ENCODE measurements at regions of chr5 and their contacts with region 1.

Region 1: GRCh38 chr5:151164686-151165392 is 7.3 kb upstream of the ANXA6 start:
- DNase-seq: peak; percentile 75
- ATAC-seq: peak; percentile 99
- H3K4me3 ChIP-seq: no peak overlapping the region
- H3K27ac ChIP-seq: no peak overlapping the region
- H3K4me1 ChIP-seq: no peaks in the 10 kb centered on the region
- H3K27me3 ChIP-seq: no peaks in the 10 kb centered on the region; the same call in 1 of the 2 replicates
- CTCF ChIP-seq: peak; percentile 92

Region 2: GRCh38 chr5:151002250-151002649 is 162.6 kb before region 1 on chr5:
- CTCF ChIA-PET with region 1: interaction called, 5 read pairs
- POLR2A ChIA-PET with region 1: no interaction called
- in situ Hi-C with region 1: no loop called
- intact Hi-C with region 1: loop called (anchors 5 kb)
- DNase-seq: no peak
- ATAC-seq: peak; percentile 60
- H3K4me3 ChIP-seq: no peak overlapping the region
- H3K27ac ChIP-seq: no peak overlapping the region
- H3K4me1 ChIP-seq: no peaks in the 10 kb centered on the region
- H3K27me3 ChIP-seq: no peaks in the 10 kb centered on the region
- CTCF ChIP-seq: peak; percentile 73

Region 3: GRCh38 chr5:151126199-151126645 is 38.6 kb before region 1 on chr5:
- CTCF ChIA-PET with region 1: interaction called, 48 read pairs
- POLR2A ChIA-PET with region 1: no interaction called
- in situ Hi-C with region 1: no loop called
- intact Hi-C with region 1: loop called (anchors 1 kb)
- DNase-seq: peak; percentile 54
- ATAC-seq: peak; percentile 90
- H3K4me3 ChIP-seq: no peak overlapping the region
- H3K27ac ChIP-seq: no peak overlapping the region
- H3K4me1 ChIP-seq: no peaks in the 10 kb centered on the region
- H3K27me3 ChIP-seq: no peaks in the 10 kb centered on the region
- CTCF ChIP-seq: peak; percentile 87

Region 4: GRCh38 chr5:151178777-151179487 is 14.1 kb after region 1 on chr5:
- CTCF ChIA-PET with region 1: interaction called, 11 read pairs
- POLR2A ChIA-PET with region 1: no interaction called
- in situ Hi-C with region 1: no loop called
- intact Hi-C with region 1: no loop called
- DNase-seq: no peak
- ATAC-seq: no peak
- H3K4me3 ChIP-seq: no peak overlapping the region
- H3K27ac ChIP-seq: no peak overlapping the region
- H3K4me1 ChIP-seq: peaks cover 2% of the 10 kb centered on the region; the same call in 1 of the 2 replicates
- H3K27me3 ChIP-seq: no peaks in the 10 kb centered on the region
- CTCF ChIP-seq: no peak